ENCODE measurements at regions of chr3 and their contacts with region 1.

Region 1: DNA sequence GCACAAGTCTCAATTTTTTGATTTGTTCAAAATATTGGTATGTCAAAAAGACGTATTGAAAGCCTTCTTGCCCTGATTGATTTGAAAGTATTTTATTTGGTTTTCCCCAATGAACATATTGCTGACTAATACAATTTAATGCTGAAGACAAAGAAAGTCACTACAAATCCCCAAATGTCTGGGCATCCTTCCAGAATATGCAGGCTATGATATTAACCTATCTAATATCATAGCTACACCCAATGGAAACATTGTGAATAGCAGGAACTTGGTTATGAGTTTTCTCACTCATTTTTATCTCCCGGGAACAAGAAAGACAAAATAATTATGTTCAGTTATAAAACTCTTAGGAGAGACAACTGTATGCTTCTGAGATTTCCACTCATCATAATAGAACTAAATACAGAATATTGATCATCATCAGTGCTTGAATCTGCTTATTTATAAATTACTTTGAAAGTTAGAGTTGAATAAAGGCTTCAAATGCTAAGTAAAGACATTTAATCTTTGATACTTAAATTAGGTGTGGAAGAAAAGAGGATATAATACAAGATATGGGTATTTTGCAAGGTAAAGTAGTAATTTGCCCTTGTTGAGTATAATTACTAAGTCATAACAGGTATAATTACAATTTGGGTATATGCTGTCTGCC is 483.9 kb downstream of the RBMS3 start:
- DNase-seq: no peak

Region 2: GRCh38 chr3:28916713-28917499 is 847.8 kb before region 1 on chr3:
- intact Hi-C with region 1: loop called (anchors 5 kb)
- DNase-seq: peak; percentile 78

Region 3: GRCh38 chr3:29144807-29145206 is 619.9 kb before region 1 on chr3:
- intact Hi-C with region 1: loop called (anchors 5 kb)
- DNase-seq: no peak

Region 4: DNA sequence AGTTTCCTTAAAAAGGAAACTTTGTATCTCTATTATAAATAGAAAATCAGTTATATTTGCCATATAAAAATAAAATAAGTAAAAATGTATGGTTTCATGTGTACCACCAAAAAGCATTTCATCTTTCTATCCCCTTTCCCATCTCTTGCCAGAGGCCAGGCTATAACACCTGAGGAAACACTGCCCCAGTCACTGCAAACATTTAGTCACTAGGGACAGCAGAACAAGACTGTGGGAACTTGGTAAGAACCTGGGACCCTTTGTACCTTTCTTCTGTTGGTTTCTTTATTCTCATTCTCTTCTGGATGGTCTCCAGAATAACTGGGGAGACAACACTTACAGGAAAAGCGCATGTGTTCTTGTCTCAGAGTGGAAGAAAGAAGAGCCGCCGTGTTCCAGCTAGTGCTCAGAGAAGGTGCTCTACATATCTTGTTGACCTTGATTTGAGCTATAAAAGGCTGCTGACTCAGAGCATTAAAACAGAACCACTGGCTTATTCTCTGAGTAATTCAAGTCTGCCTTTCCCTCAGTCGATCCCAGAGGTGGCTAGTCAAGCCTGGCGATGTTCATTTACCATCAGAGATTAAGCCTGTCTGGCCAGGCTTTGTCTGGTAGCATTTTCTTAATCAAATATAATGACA is 122.2 kb before region 1 on chr3:
- intact Hi-C with region 1: loop called (anchors 5 kb)
- DNase-seq: no peak

Region 5: GRCh38 chr3:29683018-29683993 is 81.4 kb before region 1 on chr3:
- intact Hi-C with region 1: loop called (anchors 5 kb)
- DNase-seq: no peak